ENCODE measurements at regions of chr1 and their contacts with region 1.

Region 1: GRCh38 chr1:70978623-70979022 is 69.0 kb downstream of the PTGER3 start:
- DNase-seq: no peak
- H3K4me3 ChIP-seq: no peak overlapping the region
- H3K27ac ChIP-seq: no peak overlapping the region
- H3K4me1 ChIP-seq: no peaks in the 10 kb centered on the region
- H3K27me3 ChIP-seq: no peaks in the 10 kb centered on the region
- CTCF ChIP-seq: no peak
- EP300 ChIP-seq: no peak
- RAD21 ChIP-seq: no peak

Region 2: GRCh38 chr1:70966018-70966638 is 12.5 kb before region 1 on chr1:
- CTCF ChIA-PET with region 1: interaction called, 21 read pairs
- POLR2A ChIA-PET with region 1: no interaction called
- DNase-seq: no peak
- H3K4me3 ChIP-seq: no peak overlapping the region; a peak in 1 of 4 replicates
- H3K27ac ChIP-seq: no peak overlapping the region
- H3K4me1 ChIP-seq: no peaks in the 10 kb centered on the region; a peak in 1 of 4 replicates
- H3K27me3 ChIP-seq: no peaks in the 10 kb centered on the region
- CTCF ChIP-seq: peak; percentile 60
- EP300 ChIP-seq: no peak
- RAD21 ChIP-seq: no peak

Region 3: DNA sequence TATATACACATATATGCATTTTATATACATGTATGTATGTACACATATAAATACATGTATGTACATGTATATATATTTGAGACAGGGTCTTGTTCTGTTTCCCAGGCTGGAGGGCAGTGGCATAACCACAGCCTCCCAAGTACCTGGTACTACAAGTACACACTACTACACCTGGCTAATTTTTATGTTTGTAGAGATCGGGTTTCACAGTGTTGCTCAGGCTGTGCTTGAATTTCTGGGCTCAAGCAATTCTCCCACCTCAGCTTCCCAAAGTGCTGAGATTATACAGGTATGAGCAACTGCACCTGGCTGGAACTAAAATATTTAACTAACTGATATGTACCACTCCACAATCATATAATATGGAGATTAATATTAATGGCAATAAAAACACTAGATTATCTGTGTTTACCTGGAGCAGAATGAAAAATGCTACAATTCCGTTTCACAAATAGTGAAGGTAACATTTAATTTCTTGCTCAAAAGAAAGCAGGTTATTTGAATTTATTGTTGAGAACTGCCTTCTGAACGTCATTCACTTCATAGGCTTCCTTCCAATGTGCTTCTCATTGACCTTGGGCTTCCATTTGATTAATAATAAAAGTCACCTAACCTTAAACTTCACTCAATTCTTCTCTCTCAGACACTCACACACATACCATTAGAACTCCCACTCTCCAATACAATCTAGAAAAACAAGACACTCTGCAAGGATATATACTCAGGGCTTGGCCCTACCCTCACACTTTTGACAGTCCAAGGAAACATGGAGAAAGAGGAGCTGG is 12.0 kb after region 1 on chr1:
- CTCF ChIA-PET with region 1: no interaction called
- POLR2A ChIA-PET with region 1: no interaction called
- DNase-seq: no peak
- H3K4me3 ChIP-seq: no peak overlapping the region
- H3K27ac ChIP-seq: no peak overlapping the region
- H3K4me1 ChIP-seq: no peaks in the 10 kb centered on the region
- H3K27me3 ChIP-seq: no peaks in the 10 kb centered on the region
- CTCF ChIP-seq: no peak
- EP300 ChIP-seq: no peak
- RAD21 ChIP-seq: no peak

Measured in SK-N-SH (cell line).